Natural killer cell (primary cell): ENCODE measurements at regions of chr6 and their contacts with region 1.

Region 1: DNA sequence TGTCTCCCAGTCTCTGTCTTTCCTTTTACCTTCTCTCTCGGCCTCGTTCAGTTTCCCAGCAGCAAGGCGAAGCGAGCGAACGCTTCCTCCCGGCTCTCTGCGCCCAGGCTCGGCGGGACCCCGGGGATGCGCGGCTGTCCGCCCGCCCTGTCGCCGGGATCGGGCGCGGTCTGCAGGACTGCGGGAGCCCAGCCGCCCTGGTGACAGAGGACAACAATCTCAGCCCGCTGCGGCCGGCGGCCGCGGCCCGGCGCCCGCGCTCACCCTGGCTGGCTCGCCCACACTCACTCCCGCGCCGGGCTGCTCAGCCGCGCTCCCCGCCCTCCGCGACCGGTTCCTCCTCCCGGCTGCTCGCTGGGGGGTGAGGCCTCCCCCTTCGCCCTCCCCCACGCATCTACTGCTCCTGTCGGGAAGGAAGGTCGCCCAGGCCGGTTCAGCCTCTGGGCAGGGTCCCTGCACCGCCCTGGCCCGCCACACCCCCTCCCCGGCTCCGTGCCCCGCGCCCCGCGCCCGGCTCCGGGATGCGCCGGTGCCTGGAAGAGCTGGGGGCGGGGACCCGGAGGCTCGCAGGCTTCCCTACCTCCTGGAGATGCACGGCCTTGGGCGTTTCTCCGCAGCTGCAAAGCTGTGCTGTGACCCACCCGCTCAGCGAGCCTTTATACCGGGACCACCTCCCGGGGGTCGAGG is 410 bp downstream of the SYNE1 start:
- DNase-seq: peak; percentile 35 to 40
- ATAC-seq: peak; percentile 51 to 56 (median 52)
- H3K4me3 ChIP-seq: peak overlapping the region; percentile 71
- H3K4me3 Mint-ChIP-seq: peak overlapping the region; percentile 98
- H3K27ac ChIP-seq: peak overlapping the region; percentile 72
- H3K27ac Mint-ChIP-seq: peak overlapping the region; percentile 89 to 93
- H3K4me1 ChIP-seq: peaks cover 19% of the 10 kb centered on the region
- H3K4me1 Mint-ChIP-seq: peaks cover 64 to 69% of the 10 kb centered on the region in 2 donors
- H3K27me3 ChIP-seq: no peaks in the 10 kb centered on the region
- H3K27me3 Mint-ChIP-seq: no peaks in the 10 kb centered on the region
- CTCF ChIP-seq: no peak

Region 2: GRCh38 chr6:152566103-152566875 is 70.5 kb before region 1 on chr6:
- intact Hi-C with region 1: loop called (anchors 2 kb)
- DNase-seq: peak in 1 of 2 donors; percentile 69
- ATAC-seq: peak; percentile 84 to 88 (median 86)
- H3K4me3 ChIP-seq: no peak overlapping the region
- H3K4me3 Mint-ChIP-seq: peak overlapping the region; percentile 22
- H3K27ac ChIP-seq: peak overlapping the region; percentile 23
- H3K27ac Mint-ChIP-seq: peak overlapping the region; percentile 88 to 90
- H3K4me1 ChIP-seq: peaks cover 9% of the 10 kb centered on the region
- H3K4me1 Mint-ChIP-seq: peaks cover 59 to 67% of the 10 kb centered on the region in 2 donors
- H3K27me3 ChIP-seq: no peaks in the 10 kb centered on the region
- H3K27me3 Mint-ChIP-seq: no peaks in the 10 kb centered on the region
- CTCF ChIP-seq: no peak

Region 3: DNA sequence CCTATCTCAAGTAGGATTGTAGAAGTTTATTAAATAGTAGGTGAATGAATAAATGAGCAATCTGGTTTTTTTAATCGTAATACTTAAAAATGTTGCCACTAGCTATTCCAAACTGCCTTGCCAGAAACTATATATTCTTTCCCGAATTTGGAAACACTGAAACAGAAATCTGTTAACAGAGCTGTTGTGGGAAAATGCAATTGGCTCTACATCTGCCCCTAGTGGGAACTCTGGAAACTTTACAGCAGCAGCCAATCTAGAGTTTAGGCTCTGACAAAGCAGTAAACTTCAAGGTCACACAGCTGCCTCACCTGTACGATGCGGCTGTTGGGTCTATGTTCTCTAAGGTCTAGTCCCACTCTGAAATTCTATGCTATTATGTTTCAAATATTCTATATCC is 41.2 kb before region 1 on chr6:
- intact Hi-C with region 1: loop called (anchors 5 kb)
- DNase-seq: no peak
- ATAC-seq: peak in 1 of 3 donors; percentile 54
- H3K4me3 ChIP-seq: no peak overlapping the region
- H3K4me3 Mint-ChIP-seq: no peak overlapping the region
- H3K27ac ChIP-seq: no peak overlapping the region
- H3K27ac Mint-ChIP-seq: peak overlapping the region in 1 of 2 donors; percentile 7
- H3K4me1 ChIP-seq: no peaks in the 10 kb centered on the region
- H3K4me1 Mint-ChIP-seq: peaks cover 69 to 70% of the 10 kb centered on the region in 2 donors
- H3K27me3 ChIP-seq: no peaks in the 10 kb centered on the region
- H3K27me3 Mint-ChIP-seq: no peaks in the 10 kb centered on the region
- CTCF ChIP-seq: no peak